ENCODE measurements at regions of chr12 and their contacts with region 1.

Region 1: GRCh38 chr12:59619461-59620240 is 23.8 kb downstream of the SLC16A7 start:
- DNase-seq: no peak
- ATAC-seq: no peak
- H3K4me3 ChIP-seq: no peak overlapping the region
- H3K27ac ChIP-seq: peak overlapping the region; percentile 18 to 89 (median 40)
- H3K4me1 ChIP-seq: peaks cover 0 to 39% (median 20%) of the 10 kb centered on the region in 9 donors
- H3K27me3 ChIP-seq: no peaks in the 10 kb centered on the region
- CTCF ChIP-seq: no peak

Region 2: GRCh38 chr12:59067083-59067482 is 552.6 kb before region 1 on chr12:
- intact Hi-C with region 1: no loop called
- DNase-seq: no peak
- ATAC-seq: no peak
- H3K4me3 ChIP-seq: no peak overlapping the region
- H3K27ac ChIP-seq: no peak overlapping the region
- H3K4me1 ChIP-seq: peaks cover 0 to 8% (median 0%) of the 10 kb centered on the region in 9 donors
- H3K27me3 ChIP-seq: no peaks in the 10 kb centered on the region
- CTCF ChIP-seq: no peak

Region 3: DNA sequence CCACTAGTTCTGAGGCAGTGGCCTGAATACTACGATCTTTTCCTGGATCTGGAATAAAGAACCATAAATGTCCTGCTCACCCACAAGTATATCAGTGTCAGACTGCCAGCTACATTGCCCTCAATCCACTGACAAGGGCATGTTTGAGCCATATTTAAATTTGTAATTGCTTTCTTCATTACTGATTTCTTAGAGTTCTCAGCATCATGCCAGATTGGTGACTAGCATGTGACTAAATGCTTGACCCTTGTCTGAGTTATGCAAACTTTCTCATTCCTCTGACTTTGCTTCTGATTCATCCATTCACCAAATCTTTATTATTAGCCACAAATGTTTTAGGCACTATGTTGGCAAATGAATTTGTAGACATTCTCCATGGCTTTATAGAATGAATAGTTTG is 167.4 kb before region 1 on chr12:
- intact Hi-C with region 1: no loop called
- DNase-seq: no peak
- ATAC-seq: peak in 2 of 8 donors; percentile 27 to 44
- H3K4me3 ChIP-seq: no peak overlapping the region
- H3K27ac ChIP-seq: no peak overlapping the region
- H3K4me1 ChIP-seq: peaks cover 0 to 12% (median 5%) of the 10 kb centered on the region in 9 donors
- H3K27me3 ChIP-seq: no peaks in the 10 kb centered on the region
- CTCF ChIP-seq: no peak

Region 4: GRCh38 chr12:59650402-59651228 is 31.0 kb after region 1 on chr12:
- intact Hi-C with region 1: loop called in 2 of 10 experiments (anchors 5 kb)
- DNase-seq: no peak
- ATAC-seq: peak; percentile 29 to 74 (median 64)
- H3K4me3 ChIP-seq: no peak overlapping the region
- H3K27ac ChIP-seq: peak overlapping the region in 8 of 10 donors; percentile 26 to 68 (median 56)
- H3K4me1 ChIP-seq: peaks cover 0 to 36% (median 7%) of the 10 kb centered on the region in 9 donors
- H3K27me3 ChIP-seq: no peaks in the 10 kb centered on the region
- CTCF ChIP-seq: peak in 3 of 9 donors; percentile 8 to 32 (median 22)

Region 5: DNA sequence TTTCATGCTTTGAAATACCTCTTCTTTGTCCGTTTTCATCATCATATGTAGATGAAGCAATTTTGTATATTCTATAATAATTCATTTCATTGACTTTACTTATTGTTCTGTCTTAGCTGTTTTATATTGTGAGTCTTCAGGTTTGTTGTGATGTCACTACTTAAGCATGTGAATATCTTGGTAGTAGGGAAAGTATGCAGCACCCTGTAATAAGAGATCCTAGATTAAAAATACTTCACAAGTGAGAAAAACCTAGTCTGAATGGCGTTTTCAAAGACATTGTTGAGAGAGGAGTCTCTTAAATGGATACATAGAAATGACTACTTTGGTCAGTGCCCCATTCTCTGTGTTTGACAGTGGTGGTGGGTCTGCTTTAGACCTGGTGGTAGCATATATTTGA is 37.6 kb after region 1 on chr12:
- intact Hi-C with region 1: loop called in 2 of 10 experiments (anchors 5 kb)
- DNase-seq: no peak
- ATAC-seq: no peak
- H3K4me3 ChIP-seq: no peak overlapping the region
- H3K27ac ChIP-seq: peak overlapping the region in 1 of 10 donors; percentile 22
- H3K4me1 ChIP-seq: peaks cover 0 to 14% (median 3%) of the 10 kb centered on the region in 9 donors
- H3K27me3 ChIP-seq: no peaks in the 10 kb centered on the region
- CTCF ChIP-seq: no peak

Region 6: GRCh38 chr12:59695379-59695778 is 75.7 kb after region 1 on chr12:
- intact Hi-C with region 1: no loop called
- DNase-seq: no peak
- ATAC-seq: peak in 3 of 8 donors; percentile 31 to 76 (median 55)
- H3K4me3 ChIP-seq: no peak overlapping the region
- H3K27ac ChIP-seq: no peak overlapping the region
- H3K4me1 ChIP-seq: peaks cover 0 to 19% (median 10%) of the 10 kb centered on the region in 9 donors
- H3K27me3 ChIP-seq: no peaks in the 10 kb centered on the region
- CTCF ChIP-seq: no peak

Region 7: DNA sequence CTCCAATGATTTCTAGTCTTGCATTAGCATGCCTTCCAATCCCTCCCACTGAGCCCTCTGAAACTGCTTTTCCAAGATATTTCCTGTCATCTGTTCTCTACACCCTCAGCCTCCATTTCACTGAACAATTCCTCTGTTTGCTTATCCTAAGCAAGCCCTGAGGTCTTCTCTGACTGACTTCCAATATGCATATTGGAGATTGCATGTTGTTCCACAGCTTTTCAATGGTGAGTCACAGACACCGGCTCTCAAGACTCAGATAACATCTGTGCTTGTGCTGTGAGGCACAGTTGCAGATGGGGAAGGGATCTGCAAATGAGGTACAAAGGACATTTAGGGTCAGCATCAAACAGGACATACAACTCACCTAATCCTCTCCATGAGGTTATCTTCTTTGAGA is 117.2 kb after region 1 on chr12:
- intact Hi-C with region 1: no loop called
- DNase-seq: no peak
- ATAC-seq: peak in 6 of 8 donors; percentile 20 to 62 (median 48)
- H3K4me3 ChIP-seq: no peak overlapping the region
- H3K27ac ChIP-seq: peak overlapping the region in 3 of 10 donors; percentile 10 to 19 (median 16)
- H3K4me1 ChIP-seq: peaks cover 0 to 59% (median 22%) of the 10 kb centered on the region in 9 donors
- H3K27me3 ChIP-seq: no peaks in the 10 kb centered on the region
- CTCF ChIP-seq: no peak